ENCODE measurements at regions of chr15 and their contacts with region 1.

Region 1: DNA sequence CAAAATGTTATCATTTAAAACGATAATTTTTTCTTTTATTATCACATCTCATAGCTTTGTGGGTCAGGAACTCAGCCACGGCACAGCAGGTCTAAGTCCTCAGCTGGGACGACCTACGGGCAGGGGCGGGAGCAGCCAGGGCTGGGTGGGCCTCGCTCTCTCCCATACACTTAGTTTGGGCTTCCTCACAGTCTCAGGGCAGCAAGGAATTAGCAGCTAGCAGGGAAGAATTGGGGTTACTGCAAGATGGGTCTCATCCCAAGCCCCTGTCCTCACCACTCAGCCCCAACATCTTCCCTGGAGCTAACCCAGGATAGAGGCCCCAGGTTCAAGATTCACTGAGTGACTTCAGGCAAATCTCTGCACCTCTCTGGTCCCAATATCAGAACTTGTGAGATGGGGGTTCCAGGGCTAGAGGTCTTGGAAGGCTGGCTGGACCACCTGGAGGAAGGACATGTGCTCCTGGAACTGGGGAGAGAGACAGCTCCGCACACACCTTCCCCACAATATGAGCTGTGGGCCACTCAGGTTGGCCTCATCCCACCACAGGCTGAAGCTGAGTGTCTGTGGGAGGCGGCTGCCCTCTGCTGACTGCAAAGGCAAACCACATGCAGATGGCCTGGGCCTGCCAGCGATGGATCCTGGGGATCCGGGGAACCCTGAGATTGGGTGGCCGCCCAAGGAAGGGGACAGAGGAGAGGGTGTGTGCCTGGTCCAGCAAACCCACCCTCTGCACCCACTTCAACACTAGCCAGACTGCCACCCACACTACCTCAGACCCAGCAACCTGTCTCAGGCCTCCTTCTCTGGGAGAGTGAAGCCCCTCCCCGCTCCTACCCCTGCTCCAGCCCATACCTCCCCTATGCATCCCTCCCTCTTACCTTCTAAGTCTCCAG is 45.0 kb downstream of the CYP11A1 start:
- DNase-seq: peak; percentile 62
- H3K4me3 Mint-ChIP-seq: no peak overlapping the region
- H3K27ac Mint-ChIP-seq: no peak overlapping the region
- H3K4me1 Mint-ChIP-seq: no peaks in the 10 kb centered on the region
- H3K27me3 Mint-ChIP-seq: no peaks in the 10 kb centered on the region
- CTCF ChIP-seq: peak; percentile 91

Region 2: DNA sequence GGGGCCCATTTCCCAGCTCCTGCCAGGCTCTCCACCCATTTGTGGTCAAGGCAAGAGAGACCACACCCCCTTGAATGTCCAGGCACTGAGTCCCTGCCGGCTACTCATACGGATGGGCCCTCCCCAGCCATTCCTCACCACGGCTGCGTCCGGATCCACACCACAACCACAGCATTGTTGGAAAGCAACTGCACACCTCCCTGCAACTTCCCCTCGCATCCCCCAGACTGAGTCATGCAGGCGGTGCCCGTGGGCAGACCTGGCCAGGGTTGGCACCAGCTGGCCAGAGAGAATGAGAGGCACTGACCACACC is 365.7 kb before region 1 on chr15:
- CTCF ChIA-PET with region 1: interaction called, 5 read pairs
- POLR2A ChIA-PET with region 1: no interaction called
- intact Hi-C with region 1: loop called (anchors 5 kb)
- DNase-seq: peak; percentile 91
- H3K4me3 Mint-ChIP-seq: no peak overlapping the region
- H3K27ac Mint-ChIP-seq: peak overlapping the region; percentile 36
- H3K4me1 Mint-ChIP-seq: peaks cover 29% of the 10 kb centered on the region
- H3K27me3 Mint-ChIP-seq: no peaks in the 10 kb centered on the region
- CTCF ChIP-seq: no peak

Region 3: DNA sequence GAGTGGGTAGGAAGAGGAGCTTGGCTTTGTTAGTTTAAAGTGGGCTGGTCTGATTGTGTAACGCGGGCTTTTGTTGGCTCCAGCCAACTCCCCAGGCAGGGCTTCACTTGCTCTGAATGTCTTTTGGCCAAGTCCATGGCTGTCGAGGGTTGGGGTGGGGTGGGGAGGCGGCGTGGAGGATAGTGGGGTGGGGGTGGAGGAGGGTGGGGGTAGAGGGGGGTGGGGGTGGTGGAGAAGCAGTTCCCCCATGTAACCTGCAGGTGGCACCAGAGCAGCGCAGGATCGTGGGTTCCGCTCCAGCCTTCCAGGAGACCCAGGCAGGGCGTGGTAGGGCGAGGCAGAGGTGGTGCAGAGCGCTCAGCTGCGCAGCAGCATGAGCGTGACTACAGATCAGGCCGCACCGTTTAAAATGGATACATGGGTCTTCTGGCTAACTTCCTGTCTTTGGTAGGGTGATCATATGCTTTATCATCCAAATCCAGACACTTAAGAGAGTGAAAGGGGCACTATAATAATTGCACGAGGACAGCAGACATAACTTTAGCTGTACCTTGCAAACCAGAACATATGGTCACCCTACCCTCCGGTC is 268.4 kb before region 1 on chr15:
- CTCF ChIA-PET with region 1: interaction called, 109 read pairs
- POLR2A ChIA-PET with region 1: interaction called, 3 read pairs
- intact Hi-C with region 1: no loop called
- DNase-seq: peak; percentile 75
- H3K4me3 Mint-ChIP-seq: no peak overlapping the region
- H3K27ac Mint-ChIP-seq: no peak overlapping the region
- H3K4me1 Mint-ChIP-seq: peaks cover 33% of the 10 kb centered on the region
- H3K27me3 Mint-ChIP-seq: no peaks in the 10 kb centered on the region
- CTCF ChIP-seq: peak; percentile 71

Region 4: DNA sequence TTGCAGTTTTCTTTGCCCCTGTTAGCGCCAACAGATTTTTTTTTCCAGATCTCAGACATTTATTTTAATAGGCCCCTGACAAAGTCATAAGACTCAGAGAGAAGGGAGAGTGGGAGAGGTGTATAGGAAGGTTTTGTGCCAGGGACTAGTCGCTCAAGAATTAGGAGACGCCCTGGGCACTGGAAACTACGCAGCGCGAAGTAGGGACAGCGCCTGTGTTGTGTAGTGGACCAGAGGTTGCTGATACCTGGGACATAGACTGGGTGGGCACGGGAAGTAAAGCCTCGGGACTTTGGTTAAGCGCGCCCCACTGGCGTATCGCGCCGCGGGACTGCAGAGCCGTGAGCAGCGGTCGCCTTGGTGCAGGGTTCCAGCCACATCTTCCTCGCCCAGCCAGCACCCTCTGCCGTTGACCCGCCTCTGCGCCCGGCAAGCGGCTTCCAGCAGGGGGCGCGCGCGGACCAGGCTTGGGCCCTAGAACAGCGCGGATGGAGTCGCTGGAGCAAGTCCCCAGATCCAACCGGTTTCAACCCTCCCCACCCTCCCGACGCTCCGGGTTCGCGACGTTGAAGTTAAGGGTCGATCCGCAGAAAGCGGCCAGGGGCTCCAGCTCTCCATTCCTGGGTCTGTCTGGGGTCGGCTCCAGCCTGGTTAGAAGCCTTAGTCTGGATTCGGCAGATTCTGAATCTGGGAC is 195.0 kb before region 1 on chr15:
- CTCF ChIA-PET with region 1: interaction called, 55 read pairs
- POLR2A ChIA-PET with region 1: no interaction called
- intact Hi-C with region 1: loop called (anchors 1 kb)
- DNase-seq: peak; percentile 84
- H3K4me3 Mint-ChIP-seq: peak overlapping the region; percentile 46
- H3K27ac Mint-ChIP-seq: no peak overlapping the region
- H3K4me1 Mint-ChIP-seq: no peaks in the 10 kb centered on the region
- H3K27me3 Mint-ChIP-seq: peaks cover 87% of the 10 kb centered on the region
- CTCF ChIP-seq: peak; percentile 98

Region 5: GRCh38 chr15:74302821-74303359 is 19.5 kb before region 1 on chr15:
- CTCF ChIA-PET with region 1: interaction called, 107 read pairs
- POLR2A ChIA-PET with region 1: no interaction called
- intact Hi-C with region 1: no loop called
- DNase-seq: peak; percentile 54
- H3K4me3 Mint-ChIP-seq: no peak overlapping the region
- H3K27ac Mint-ChIP-seq: no peak overlapping the region
- H3K4me1 Mint-ChIP-seq: peaks cover 5% of the 10 kb centered on the region
- H3K27me3 Mint-ChIP-seq: peaks cover 83% of the 10 kb centered on the region
- CTCF ChIP-seq: peak; percentile 69

Region 6: DNA sequence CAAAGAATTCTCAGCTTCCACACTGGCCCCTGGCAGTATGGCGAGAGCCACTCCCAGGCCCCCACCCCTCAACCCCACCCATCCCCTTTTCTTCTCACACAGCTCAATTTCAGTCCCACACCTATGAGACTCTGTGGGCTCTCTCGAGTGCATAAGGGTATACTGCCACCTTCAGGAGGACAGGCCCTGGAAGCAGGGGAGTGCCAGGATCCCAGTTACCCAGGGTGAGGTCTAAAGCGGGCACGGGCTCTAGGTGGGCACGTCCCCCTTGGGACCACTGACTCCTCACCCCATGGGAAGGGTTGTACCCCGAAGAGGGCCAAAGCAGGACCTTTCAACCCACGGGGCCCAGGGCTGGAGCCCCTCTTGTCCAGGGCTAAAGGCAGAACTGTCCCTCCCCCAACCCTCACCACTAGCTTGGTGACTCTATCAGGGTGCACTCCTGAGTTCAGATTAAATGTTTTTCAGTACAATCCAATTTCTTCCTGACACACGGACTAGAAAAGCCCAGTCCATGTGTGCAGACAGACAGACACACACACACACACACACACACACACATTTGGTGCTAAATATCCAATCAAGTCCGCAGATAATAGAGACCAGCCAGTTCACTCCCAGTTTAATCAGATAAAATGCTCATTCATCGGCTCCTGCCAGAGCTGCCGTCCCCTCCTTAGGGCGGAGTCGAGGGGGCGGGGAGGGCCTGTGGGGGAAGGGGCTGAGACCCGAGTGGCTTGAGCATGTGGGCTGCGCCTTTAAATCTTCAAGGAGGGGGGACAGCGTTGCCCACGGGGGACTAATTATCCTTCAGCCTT is 14.4 kb before region 1 on chr15:
- CTCF ChIA-PET with region 1: interaction called, 107 read pairs
- POLR2A ChIA-PET with region 1: no interaction called
- intact Hi-C with region 1: loop called (anchors 1 kb)
- DNase-seq: peak; percentile 77
- H3K4me3 Mint-ChIP-seq: no peak overlapping the region
- H3K27ac Mint-ChIP-seq: no peak overlapping the region
- H3K4me1 Mint-ChIP-seq: peaks cover 5% of the 10 kb centered on the region
- H3K27me3 Mint-ChIP-seq: peaks cover 60% of the 10 kb centered on the region
- CTCF ChIP-seq: peak; percentile 73

Measured in MCF 10A (cell line).